ENCODE measurements at regions of chr14 and their contacts with region 1.

Region 1: DNA sequence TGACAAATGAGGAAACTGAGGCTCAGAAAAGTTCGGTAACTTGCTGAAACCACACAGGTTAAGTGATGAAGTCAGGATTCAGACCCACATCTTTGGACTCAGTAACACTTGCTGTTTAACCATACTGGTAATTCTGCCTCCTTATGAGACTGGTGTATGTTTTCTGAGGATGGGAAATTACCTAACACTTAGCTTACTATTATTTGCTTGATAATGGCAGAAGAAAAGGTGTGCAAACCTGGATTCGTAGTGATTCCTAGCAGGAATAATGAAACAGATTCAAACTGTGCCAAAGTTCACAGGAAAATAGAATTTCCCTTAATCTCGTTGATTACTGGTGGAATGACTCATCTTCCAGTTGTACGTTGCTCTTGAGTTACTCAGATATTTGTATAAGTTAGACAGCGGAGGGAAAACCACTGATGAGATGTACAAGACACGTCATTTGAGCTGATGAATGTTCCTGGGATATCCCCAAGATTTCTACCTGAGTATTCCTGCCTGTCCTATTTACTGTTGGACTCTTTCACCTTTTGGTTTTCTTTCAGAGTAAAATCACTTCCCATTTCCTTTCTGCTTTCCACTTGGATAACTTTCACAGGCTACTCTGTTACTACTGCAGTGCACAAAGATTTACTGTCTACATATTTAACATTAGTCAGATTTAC is 37.5 kb downstream of the PRORP start:
- DNase-seq: no peak
- H3K4me3 ChIP-seq: no peak overlapping the region
- H3K27ac ChIP-seq: no peak overlapping the region
- H3K4me1 ChIP-seq: no peaks in the 10 kb centered on the region
- H3K27me3 ChIP-seq: no peaks in the 10 kb centered on the region
- CTCF ChIP-seq: no peak
- EP300 ChIP-seq: no peak
- POLR2A ChIP-seq: no peak

Region 2: DNA sequence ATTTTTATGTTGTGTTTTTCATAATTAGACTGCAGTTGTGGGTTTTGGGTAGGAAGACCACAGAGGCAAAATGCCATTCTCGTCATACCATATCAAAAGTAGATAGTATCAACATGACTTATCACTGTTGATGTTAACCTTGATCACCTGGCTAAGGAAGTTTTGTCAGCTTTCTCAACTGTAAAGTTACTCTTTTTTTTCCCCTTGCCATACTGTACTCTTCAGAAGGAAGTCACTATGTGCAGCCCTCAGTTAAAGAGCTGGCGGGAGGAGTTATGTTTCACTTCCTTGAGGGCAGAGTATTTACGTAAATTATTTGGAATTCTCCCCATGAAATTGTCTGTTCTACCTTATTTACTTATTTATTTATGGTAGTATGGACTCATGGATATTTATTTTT is 41.2 kb after region 1 on chr14:
- intact Hi-C with region 1: loop called in 1 of 4 experiments (anchors 10 kb)
- DNase-seq: no peak
- H3K4me3 ChIP-seq: no peak overlapping the region
- H3K27ac ChIP-seq: no peak overlapping the region
- H3K4me1 ChIP-seq: no peaks in the 10 kb centered on the region
- H3K27me3 ChIP-seq: no peaks in the 10 kb centered on the region
- CTCF ChIP-seq: no peak
- EP300 ChIP-seq: no peak
- POLR2A ChIP-seq: no peak

Measured in ovary (tissue), 10 donors.